Adrenal gland (tissue), 19 donors: ENCODE measurements at regions of chr3 and their contacts with region 1.

Region 1: DNA sequence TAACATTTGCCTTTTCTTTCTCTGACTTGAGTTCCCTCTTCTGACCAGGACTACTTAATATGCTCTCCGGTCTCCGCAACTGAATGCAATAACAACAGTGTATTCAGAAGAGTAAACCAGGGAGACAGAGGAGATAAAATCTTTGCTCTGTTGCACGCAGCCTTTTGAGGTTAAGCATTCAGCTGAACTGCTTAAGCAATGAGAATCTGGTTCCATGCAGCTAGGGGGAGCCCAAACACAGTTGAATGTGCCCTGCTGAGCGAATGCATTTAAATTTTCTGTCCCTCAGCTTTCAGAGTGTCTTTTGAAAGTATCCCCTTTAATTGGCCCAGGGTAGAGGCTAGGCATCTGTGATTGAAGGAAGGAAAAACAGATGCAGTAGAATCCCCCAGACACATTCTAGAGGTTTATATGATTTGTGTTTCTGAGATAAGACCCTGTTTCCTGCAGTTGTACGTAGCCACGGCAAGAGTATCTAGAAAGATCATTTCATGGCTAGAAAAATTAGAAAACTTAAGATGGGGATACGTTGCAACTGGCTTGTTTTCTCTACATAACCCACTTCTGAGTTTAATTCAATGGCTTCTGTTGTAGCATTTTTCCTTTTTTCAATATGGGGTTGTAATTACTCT is 309.6 kb downstream of the TUSC7 start:
- DNase-seq: peak; percentile 67 to 90 (median 74)
- H3K4me3 ChIP-seq: no peak overlapping the region
- H3K27ac ChIP-seq: no peak overlapping the region
- H3K4me1 ChIP-seq: peaks cover 0 to 8% of the 10 kb centered on the region in 2 donors
- H3K27me3 ChIP-seq: no peaks in the 10 kb centered on the region
- CTCF ChIP-seq: peak; percentile 58 to 90 (median 84)
- POLR2A ChIP-seq: no peak

Region 2: GRCh38 chr3:116863822-116864589 is 155.2 kb before region 1 on chr3:
- intact Hi-C with region 1: loop called in 1 of 2 experiments (anchors 10 kb)
- DNase-seq: peak in 6 of 7 donors; percentile 31 to 65 (median 45)
- H3K4me3 ChIP-seq: peak overlapping the region in 3 of 4 donors; percentile 4 to 60 (median 18)
- H3K27ac ChIP-seq: no peak overlapping the region
- H3K4me1 ChIP-seq: peaks cover 0 to 12% of the 10 kb centered on the region in 2 donors
- H3K27me3 ChIP-seq: no peaks in the 10 kb centered on the region
- CTCF ChIP-seq: peak; percentile 23 to 81 (median 72)
- POLR2A ChIP-seq: no peak